Posterior vena cava (tissue), 2 donors: ENCODE measurements at regions of chr2 and their contacts with region 1.

Region 1: DNA sequence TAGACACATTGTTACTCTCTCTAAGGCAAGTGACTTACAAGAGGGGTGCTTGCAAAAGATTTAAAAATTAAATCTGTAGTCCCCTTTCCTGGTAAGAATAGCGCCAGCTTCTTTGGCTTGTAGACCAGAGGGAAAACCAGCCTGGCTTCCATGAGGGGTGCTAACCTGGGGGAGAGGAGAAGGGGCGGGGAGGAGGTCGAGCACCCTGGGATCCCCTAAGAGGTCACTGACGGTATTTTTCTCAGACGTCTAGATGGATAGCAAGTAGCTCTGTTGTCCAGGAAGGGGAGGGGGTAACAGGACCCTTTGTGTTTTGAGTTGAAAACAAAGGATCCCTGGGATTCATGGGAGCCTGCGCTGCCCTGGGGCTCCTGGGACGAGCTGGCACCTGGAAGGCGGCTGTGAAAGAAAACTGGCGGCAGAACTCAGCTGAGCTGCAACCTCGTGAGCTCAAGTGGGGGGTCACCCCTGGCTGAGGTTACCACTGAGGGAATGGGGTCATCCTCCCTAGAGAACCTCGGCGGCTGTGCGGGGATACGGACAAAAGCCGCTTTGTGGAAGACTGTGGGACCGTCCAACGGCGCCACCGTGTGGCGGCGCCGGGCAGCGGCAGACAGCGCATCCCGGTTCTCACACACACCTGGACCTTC is 37.8 kb upstream of the MRPL19 start:
- DNase-seq: peak; percentile 85

Region 2: DNA sequence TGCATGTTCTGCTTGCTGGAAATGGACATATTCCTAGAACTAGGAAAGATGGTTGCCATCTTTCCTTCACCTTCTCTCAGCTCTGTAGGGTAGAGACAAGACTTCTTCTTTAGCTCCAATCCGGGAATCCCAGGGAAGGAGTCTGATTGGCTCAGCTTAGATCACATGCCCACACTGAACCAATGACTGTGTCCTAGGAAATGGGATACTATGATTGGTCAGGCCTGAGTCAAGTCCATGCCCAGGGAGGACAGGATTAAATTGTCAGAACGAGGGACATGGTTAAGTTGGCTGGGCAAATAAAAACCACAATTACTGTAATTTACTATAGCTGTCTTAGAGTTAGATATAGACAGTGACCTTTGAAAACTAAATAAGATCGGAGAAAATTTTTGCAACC is 923.4 kb before region 1 on chr2:
- intact Hi-C with region 1: loop called in 1 of 2 experiments (anchors 10 kb)
- DNase-seq: no peak

Region 3: GRCh38 chr2:75241696-75242095 is 367.1 kb before region 1 on chr2:
- intact Hi-C with region 1: no loop called
- DNase-seq: no peak

Region 4: DNA sequence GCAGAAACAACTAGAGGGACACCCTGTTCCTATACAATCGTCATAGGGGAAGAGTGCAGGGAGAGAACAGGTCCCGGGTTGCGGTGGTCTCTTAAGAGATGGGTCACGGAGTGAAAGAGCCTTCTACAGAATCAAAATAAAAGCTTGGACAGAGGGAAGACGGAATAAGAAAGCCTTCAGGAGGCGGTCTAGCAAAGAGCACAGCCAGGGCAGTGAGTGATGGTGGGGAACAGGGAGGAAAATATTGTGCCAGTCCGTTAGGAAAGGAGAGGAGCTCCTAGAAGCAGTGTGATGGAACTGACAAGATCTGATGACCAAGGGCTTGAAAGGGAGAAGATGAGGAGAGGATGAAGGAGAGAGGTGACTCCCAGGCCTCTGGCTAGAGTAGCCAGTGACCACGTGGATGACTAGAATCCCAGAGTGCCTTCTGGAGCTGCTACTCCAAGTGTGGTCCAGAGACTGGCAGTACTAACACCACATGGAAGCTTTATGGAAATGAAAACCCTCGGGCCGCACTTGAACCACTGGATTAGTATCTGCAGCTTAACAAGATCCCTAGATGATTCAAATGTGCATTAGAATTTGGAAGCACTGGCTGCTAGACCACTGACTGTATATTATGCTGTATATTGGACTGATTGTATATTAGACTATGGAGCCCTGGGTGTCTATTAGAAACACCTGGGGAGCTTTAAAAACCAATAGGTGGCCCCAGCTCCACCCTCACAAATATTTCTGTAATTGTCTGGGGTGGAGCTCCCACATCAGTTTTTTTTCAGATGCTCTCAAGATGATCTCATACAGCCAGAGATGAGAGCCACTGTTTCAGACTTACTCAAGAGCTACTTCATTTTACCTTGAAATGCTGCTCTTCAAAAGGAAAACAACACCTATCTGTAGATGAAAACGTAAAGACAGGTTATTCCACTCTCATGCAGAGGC is 47.0 kb before region 1 on chr2:
- intact Hi-C with region 1: loop called in 1 of 2 experiments (anchors 1 kb)
- DNase-seq: no peak

Region 5: DNA sequence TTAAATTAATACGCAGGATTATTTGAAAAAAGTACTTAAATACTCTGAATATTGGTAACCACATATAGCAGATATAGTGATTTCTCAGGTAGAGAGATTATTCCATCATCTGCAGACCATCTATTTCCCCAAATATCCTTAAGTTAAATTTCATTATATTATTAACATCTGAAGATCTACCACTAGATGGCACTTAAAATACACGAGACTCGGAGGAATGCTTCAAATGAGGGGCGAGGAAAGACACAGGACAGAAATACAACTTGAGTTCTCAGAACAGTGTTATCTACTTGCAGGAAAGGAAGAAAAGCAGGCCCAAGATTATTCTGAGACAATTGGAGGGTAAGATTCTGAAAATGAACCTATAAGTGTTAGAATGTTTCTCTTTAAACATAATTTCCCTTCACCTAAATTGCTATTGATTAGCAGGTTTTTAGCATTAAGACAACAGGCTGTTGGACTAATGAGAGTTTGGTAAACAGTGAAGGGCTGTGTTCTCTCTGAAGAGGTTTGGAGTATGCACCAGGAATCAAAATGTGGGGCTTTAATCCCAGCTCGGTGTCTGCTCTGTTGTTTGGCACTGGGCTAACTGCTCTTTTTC is 178.8 kb after region 1 on chr2:
- intact Hi-C with region 1: no loop called
- DNase-seq: no peak